ENCODE measurements at regions of chr14 and their contacts with region 1.

Region 1: GRCh38 chr14:50943943-50944646 is at the start of gene PYGL:
- DNase-seq: peak; percentile 43
- ATAC-seq: peak; percentile 85
- H3K4me3 ChIP-seq: peak within 1 kb of the TSS; percentile 77 to 95
- H3K27ac ChIP-seq: peak within 1 kb of the TSS; percentile 95
- H3K4me1 ChIP-seq: peaks cover 3 to 12% of the 10 kb centered on the region in 2 experiments; a peak in 3 of 4 replicates
- H3K27me3 ChIP-seq: no peaks in the 10 kb centered on the region
- CTCF ChIP-seq: no peak
- POLR2A ChIP-seq: peak; percentile 91
- RAD21 ChIP-seq: no peak
- total RNA-seq, gene PYGL: 173 TPM

Region 2: GRCh38 chr14:50835280-50835679 is 108.8 kb before region 1 on chr14:
- CTCF ChIA-PET with region 1: no interaction called
- POLR2A ChIA-PET with region 1: no interaction called
- RAD21 ChIA-PET with region 1: no interaction called
- intact Hi-C with region 1: no loop called
- DNase-seq: no peak
- ATAC-seq: no peak
- H3K4me3 ChIP-seq: no peak overlapping the region
- H3K27ac ChIP-seq: no peak overlapping the region
- H3K4me1 ChIP-seq: peaks cover 4 to 12% of the 10 kb centered on the region in 2 experiments; a peak in 3 of 4 replicates
- H3K27me3 ChIP-seq: 0 out of 2 replicates have a peak, but pooled peaks cover 3% of the 10 kb centered on the region
- CTCF ChIP-seq: no peak
- POLR2A ChIP-seq: no peak
- RAD21 ChIP-seq: no peak

Region 3: DNA sequence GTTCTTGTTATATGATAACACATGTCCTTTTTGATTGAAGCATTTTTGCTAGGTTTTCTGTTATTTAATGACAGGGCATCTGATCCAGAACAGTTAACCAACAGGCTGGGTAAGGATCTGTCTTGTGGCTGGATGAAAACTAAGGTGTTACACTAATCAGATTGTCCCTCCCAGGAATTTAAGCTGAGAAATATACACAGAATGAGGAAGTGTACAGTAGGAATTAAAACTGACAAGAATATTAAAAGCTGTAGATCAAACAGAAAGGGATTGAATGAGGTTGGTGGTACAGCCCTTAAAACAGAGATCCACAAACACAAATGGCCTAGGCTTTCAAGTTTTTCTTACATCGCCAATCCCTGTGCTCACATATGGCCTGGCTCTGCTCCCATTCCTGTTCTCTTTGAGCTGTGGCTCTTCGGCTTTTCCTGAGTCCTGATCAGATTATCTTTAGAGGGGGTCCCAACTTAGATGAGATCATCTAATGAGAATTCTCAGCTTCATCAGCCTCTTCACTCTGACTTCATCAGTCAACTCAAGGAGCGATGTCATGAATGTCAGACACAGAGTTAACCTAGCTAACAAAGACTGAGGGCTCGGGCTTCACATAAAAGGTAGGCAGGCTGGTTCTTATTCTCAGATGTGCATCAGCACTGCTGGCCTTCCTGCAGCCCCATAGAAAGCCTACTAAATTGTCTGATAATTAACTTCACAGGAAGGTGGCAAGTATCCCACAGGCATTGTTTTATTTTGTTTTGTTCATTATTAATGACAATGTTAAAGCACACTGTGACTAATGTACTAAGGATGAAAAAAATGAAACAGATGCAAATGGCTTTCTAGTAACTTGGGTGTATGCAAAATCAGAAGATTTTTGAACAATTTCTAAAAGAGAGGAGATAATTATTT is 11.2 kb before region 1 on chr14:
- CTCF ChIA-PET with region 1: no interaction called
- POLR2A ChIA-PET with region 1: interaction called, 11 read pairs
- RAD21 ChIA-PET with region 1: no interaction called
- intact Hi-C with region 1: no loop called
- DNase-seq: no peak
- ATAC-seq: no peak
- H3K4me3 ChIP-seq: no peak overlapping the region
- H3K27ac ChIP-seq: no peak overlapping the region
- H3K4me1 ChIP-seq: no peaks in the 10 kb centered on the region; a peak in 1 of 4 replicates
- H3K27me3 ChIP-seq: no peaks in the 10 kb centered on the region
- CTCF ChIP-seq: no peak
- POLR2A ChIP-seq: no peak
- RAD21 ChIP-seq: no peak

Measured in HCT116 (cell line).